ENCODE measurements at regions of chr10 and their contacts with region 1.

Region 1: GRCh38 chr10:125694874-125695273 is 11.9 kb upstream of the TEX36 start:
- DNase-seq: peak; percentile 40 to 84
- H3K4me3 ChIP-seq: no peak overlapping the region
- H3K27ac ChIP-seq: 0 out of 2 replicates have a peak overlapping the region, but pooled peaks have one; percentile 24
- H3K4me1 ChIP-seq: peaks cover 13% of the 10 kb centered on the region
- H3K27me3 ChIP-seq: no peaks in the 10 kb centered on the region
- CTCF ChIP-seq: no peak

Region 2: GRCh38 chr10:125048101-125048864 is 646.6 kb before region 1 on chr10:
- CTCF ChIA-PET with region 1: no interaction called
- POLR2A ChIA-PET with region 1: interaction called, 9 read pairs
- intact Hi-C with region 1: loop called (anchors 5 kb)
- DNase-seq: peak; percentile 44 to 72
- H3K4me3 ChIP-seq: no peak overlapping the region
- H3K27ac ChIP-seq: no peak overlapping the region
- H3K4me1 ChIP-seq: peaks cover 32% of the 10 kb centered on the region
- H3K27me3 ChIP-seq: no peaks in the 10 kb centered on the region
- CTCF ChIP-seq: peak; percentile 85

Region 3: GRCh38 chr10:125263555-125263954 is 431.3 kb before region 1 on chr10:
- CTCF ChIA-PET with region 1: no interaction called
- POLR2A ChIA-PET with region 1: interaction called, 3 read pairs
- intact Hi-C with region 1: loop called (anchors 5 kb)
- DNase-seq: peak; percentile 67 to 91
- H3K4me3 ChIP-seq: peak overlapping the region; percentile 38; the same call in 1 of the 2 replicates
- H3K27ac ChIP-seq: peak overlapping the region; percentile 92
- H3K4me1 ChIP-seq: peaks cover 42% of the 10 kb centered on the region
- H3K27me3 ChIP-seq: no peaks in the 10 kb centered on the region
- CTCF ChIP-seq: no peak

Region 4: GRCh38 chr10:125629763-125630376 is 65.0 kb before region 1 on chr10:
- CTCF ChIA-PET with region 1: no interaction called
- POLR2A ChIA-PET with region 1: no interaction called
- intact Hi-C with region 1: loop called (anchors 2 kb)
- DNase-seq: peak; percentile 4 to 65
- H3K4me3 ChIP-seq: no peak overlapping the region
- H3K27ac ChIP-seq: no peak overlapping the region
- H3K4me1 ChIP-seq: no peaks in the 10 kb centered on the region
- H3K27me3 ChIP-seq: no peaks in the 10 kb centered on the region
- CTCF ChIP-seq: peak; percentile 74

Region 5: GRCh38 chr10:125661941-125662515 is 32.8 kb before region 1 on chr10:
- CTCF ChIA-PET with region 1: no interaction called
- POLR2A ChIA-PET with region 1: interaction called, 28 read pairs
- intact Hi-C with region 1: loop called (anchors 1 kb)
- DNase-seq: peak; percentile 73 to 93
- H3K4me3 ChIP-seq: no peak overlapping the region
- H3K27ac ChIP-seq: peak overlapping the region; percentile 90
- H3K4me1 ChIP-seq: peaks cover 22% of the 10 kb centered on the region
- H3K27me3 ChIP-seq: no peaks in the 10 kb centered on the region
- CTCF ChIP-seq: no peak

Region 6: DNA sequence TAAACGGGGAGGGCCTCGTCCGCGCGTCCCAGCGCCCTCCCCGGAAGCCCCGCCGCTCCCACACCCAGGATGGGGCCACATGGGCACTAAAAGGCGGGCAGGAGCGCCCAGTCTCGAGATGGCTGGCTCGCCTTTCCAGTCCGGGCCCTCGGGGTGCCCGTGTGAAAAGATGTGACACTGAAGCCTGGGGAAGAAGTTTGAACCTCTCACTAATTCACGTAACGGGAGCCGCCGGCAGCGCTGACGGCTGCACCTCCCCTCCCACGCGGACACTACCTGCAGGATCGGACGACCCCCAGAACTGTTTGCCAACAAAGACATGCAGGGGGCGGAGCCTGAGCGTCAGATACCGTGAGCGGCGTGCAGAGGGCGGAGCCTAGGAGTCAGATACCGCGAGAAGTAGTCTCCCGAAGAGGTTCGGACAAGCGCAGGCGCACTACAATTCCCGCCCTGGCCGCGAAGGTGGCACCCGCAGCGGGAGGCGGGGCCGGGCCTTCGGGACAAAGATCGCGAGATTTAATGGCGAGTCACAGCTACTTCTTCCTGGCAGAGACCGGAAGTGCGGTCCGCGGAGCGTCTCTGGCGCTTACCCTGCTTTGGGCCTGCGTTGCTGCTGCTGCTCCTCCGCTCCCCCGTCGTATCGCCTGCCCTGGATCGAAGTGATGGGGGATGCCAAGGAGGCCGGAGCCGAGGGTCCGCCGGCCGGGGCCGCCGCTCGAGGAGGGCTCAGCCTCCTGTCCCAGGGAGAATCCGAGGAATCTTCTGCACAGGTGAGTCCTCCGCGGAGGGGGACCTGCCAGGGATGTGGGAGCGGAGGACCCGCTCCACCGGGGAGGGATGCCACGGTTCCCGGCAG is 24.5 kb after region 1 on chr10 and contains the start of gene EDRF1:
- CTCF ChIA-PET with region 1: no interaction called
- POLR2A ChIA-PET with region 1: no interaction called
- intact Hi-C with region 1: loop called (anchors 2 kb)
- DNase-seq: peak; percentile 92 to 97
- H3K4me3 ChIP-seq: peak within 1 kb of the TSS; percentile 98
- H3K27ac ChIP-seq: peak within 1 kb of the TSS; percentile 76
- H3K4me1 ChIP-seq: peaks cover 12% of the 10 kb centered on the region
- H3K27me3 ChIP-seq: no peaks in the 10 kb centered on the region
- CTCF ChIP-seq: no peak
- total RNA-seq, gene EDRF1: 12.8 and 21.7 TPM in 2 replicates